Ovary (tissue), 10 donors: ENCODE measurements at regions of chr2 and their contacts with region 1.

Region 1: DNA sequence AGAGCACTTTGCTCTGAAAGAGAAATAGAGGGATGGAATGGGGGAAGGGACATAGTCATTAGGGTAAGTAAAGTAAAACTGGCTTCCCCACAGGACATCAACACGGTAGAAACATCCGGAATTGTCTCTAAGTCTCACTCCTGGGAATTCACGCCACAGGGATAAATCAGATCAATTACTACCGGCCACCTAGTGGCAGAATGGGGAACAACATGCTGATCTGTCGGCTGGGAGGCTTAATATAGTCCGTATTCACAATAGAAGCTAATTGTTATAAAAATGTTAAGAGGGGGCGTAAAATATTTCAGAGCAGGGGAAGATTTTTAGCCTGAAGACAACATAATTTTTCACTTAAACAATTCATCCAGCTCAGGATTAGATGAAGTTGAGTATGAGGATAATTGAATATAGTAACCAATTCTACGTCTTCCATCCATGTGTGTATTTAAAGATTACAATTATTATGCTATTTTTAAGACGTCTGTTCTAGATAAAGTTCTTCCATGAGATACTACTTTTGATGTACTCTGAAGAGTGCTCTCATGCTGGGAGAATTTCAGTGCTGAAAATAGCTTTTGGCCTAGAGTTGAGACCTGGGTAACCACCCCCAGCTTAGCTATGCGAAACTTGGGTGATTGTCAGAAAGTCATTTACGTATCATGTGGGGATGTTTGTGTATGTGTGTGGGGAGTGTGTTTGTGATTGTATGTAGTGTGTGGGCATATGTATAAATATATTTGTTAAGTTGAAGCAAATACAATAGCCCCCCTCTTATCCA is 65.7 kb downstream of the LRRTM1 start:
- DNase-seq: no peak
- H3K4me3 ChIP-seq: no peak overlapping the region
- H3K27ac ChIP-seq: no peak overlapping the region
- H3K4me1 ChIP-seq: no peaks in the 10 kb centered on the region
- H3K27me3 ChIP-seq: no peaks in the 10 kb centered on the region
- CTCF ChIP-seq: no peak
- EP300 ChIP-seq: no peak
- POLR2A ChIP-seq: no peak

Region 2: GRCh38 chr2:78465707-78466106 is 1773.2 kb before region 1 on chr2:
- intact Hi-C with region 1: loop called in 1 of 4 experiments (anchors 5 kb)
- DNase-seq: no peak
- H3K4me3 ChIP-seq: no peak overlapping the region
- H3K27ac ChIP-seq: no peak overlapping the region
- H3K4me1 ChIP-seq: no peaks in the 10 kb centered on the region
- H3K27me3 ChIP-seq: no peaks in the 10 kb centered on the region
- CTCF ChIP-seq: no peak
- EP300 ChIP-seq: no peak
- POLR2A ChIP-seq: no peak

Region 3: GRCh38 chr2:80102026-80102425 is 136.9 kb before region 1 on chr2:
- intact Hi-C with region 1: no loop called
- DNase-seq: no peak
- H3K4me3 ChIP-seq: no peak overlapping the region
- H3K27ac ChIP-seq: no peak overlapping the region
- H3K4me1 ChIP-seq: no peaks in the 10 kb centered on the region
- H3K27me3 ChIP-seq: no peaks in the 10 kb centered on the region
- CTCF ChIP-seq: no peak
- EP300 ChIP-seq: no peak
- POLR2A ChIP-seq: no peak

Region 4: DNA sequence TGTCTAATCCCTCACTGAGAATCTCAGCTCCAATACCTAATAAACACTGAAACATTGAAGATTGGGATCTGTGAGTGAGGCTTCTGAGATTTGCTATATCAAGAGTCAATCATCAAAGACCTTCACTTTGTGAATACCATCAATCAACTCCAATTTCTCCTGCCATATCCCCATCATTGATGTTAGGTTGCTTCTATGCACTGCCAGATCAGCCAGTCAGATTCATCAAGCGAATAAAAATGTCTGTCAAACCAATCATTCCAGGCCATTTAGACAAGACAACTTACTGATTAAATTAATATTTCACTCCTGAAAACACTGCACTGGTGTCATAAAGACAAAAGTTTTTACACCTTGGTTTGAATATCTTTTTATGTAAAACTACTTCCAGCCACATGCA is 1361.2 kb after region 1 on chr2:
- intact Hi-C with region 1: loop called in 1 of 4 experiments (anchors 5 kb)
- DNase-seq: no peak
- H3K4me3 ChIP-seq: no peak overlapping the region
- H3K27ac ChIP-seq: no peak overlapping the region
- H3K4me1 ChIP-seq: no peaks in the 10 kb centered on the region
- H3K27me3 ChIP-seq: no peaks in the 10 kb centered on the region
- CTCF ChIP-seq: no peak
- EP300 ChIP-seq: no peak
- POLR2A ChIP-seq: no peak